Panc1 (cell line): ENCODE measurements at regions of chr6 and their contacts with region 1.

Region 1: DNA sequence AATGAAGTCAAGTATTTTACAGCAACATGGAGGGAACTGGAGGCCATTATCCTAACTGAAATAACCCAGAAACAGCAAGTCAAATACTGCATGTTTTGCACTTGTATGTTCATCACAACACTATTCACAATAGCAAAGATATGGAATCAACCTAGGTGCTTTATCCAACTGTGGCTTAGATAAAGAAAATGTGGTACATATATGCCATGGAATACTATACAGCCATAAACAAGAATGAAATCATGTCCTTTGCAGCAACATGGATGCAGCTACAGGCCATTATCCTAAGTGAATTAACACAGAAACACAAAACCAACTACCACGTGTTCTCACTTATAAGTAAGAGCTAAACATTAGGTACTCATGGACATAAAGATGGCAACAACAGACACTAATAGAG is 91.5 kb upstream of the E2F3 start:
- DNase-seq: no peak
- ATAC-seq: no peak
- H3K4me3 ChIP-seq: no peak overlapping the region
- H3K27ac ChIP-seq: no peak overlapping the region
- H3K4me1 ChIP-seq: no peaks in the 10 kb centered on the region
- H3K27me3 ChIP-seq: peaks cover 13% of the 10 kb centered on the region
- CTCF ChIP-seq: no peak

Region 2: DNA sequence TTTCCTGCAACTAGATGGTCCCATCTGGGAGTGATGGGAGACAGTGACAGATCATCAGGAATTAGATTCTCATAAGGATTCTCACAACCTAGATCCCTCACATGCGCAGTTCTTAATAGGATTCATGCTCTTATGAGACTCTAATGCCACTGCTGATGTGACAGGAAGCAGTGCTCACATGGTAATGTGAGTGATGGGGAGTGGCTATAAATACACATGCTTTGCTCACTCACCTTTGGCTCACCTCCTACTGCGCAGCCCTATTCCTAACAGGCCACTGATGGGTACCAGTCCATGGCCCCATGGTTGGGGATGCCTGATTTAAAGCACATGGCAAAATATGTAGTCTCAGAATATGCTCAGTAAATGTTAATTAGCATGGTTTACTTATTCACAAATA is 17.3 kb before region 1 on chr6:
- CTCF ChIA-PET with region 1: no interaction called
- POLR2A ChIA-PET with region 1: no interaction called
- in situ Hi-C with region 1: no loop called
- intact Hi-C with region 1: no loop called
- DNase-seq: no peak
- ATAC-seq: no peak
- H3K4me3 ChIP-seq: no peak overlapping the region
- H3K27ac ChIP-seq: no peak overlapping the region
- H3K4me1 ChIP-seq: no peaks in the 10 kb centered on the region
- H3K27me3 ChIP-seq: no peaks in the 10 kb centered on the region
- CTCF ChIP-seq: no peak

Region 3: GRCh38 chr6:20417819-20418218 is 107.6 kb after region 1 on chr6:
- CTCF ChIA-PET with region 1: no interaction called
- POLR2A ChIA-PET with region 1: no interaction called
- in situ Hi-C with region 1: no loop called
- intact Hi-C with region 1: no loop called
- DNase-seq: no peak
- ATAC-seq: peak; percentile 21; the same call in 1 of the 2 replicates
- H3K4me3 ChIP-seq: no peak overlapping the region
- H3K27ac ChIP-seq: no peak overlapping the region
- H3K4me1 ChIP-seq: peaks cover 10% of the 10 kb centered on the region
- H3K27me3 ChIP-seq: no peaks in the 10 kb centered on the region
- CTCF ChIP-seq: no peak

Region 4: DNA sequence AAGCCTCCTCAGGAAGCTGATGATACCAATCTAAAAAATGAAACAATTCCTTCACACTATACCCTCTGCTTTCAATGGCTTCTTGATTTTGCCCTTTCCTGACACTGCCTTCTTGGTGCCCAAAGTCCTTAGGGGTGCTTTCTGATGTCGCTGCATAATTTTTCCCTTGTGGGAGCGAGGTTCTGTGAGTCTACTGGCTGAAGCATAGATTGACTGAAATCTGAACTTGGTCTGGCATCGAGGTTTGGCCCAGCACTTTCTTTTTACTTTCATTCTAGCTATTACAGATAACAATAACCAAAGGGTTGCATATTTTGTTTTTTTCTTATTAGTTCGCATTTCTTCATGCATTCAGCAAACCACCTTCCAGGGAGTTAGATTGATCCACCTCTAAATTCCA is 157.3 kb after region 1 on chr6:
- CTCF ChIA-PET with region 1: no interaction called
- POLR2A ChIA-PET with region 1: interaction called, 13 read pairs
- in situ Hi-C with region 1: no loop called
- intact Hi-C with region 1: no loop called
- DNase-seq: no peak
- ATAC-seq: no peak
- H3K4me3 ChIP-seq: no peak overlapping the region
- H3K27ac ChIP-seq: no peak overlapping the region
- H3K4me1 ChIP-seq: 0 out of 2 replicates have a peak, but pooled peaks cover 4% of the 10 kb centered on the region
- H3K27me3 ChIP-seq: no peaks in the 10 kb centered on the region
- CTCF ChIP-seq: no peak

Region 5: DNA sequence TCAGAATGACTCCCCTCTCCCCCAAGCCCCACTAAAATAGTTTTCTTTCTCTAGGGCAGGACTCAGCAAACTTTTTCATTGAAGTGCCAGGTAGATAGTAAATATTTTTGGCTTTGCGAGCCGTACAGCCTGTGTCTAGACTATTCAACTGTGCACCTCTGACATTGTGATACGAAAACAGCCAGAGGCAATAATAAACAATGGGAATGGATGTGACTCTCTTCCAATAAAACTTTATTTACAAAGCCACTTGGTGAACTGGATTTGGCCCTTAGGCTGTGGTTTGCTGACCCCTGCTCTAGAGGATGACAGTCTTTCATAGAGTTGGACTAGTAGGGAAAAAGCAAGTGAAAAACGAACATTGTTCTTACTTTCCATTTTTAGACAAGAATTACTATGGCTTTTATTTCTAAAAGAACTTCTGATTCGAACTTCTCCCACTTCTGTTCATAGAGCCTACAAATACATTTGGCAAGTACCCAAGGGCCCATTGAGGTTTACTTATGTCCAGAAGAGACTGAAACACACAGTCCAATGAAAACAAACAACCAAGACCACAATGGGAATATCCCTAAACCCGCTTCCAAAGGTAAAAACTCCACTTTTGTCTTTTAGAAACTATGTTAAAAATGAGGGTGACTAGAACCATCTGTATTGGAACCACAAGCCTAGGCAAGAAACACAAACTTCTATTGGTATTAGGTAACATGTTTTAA is 177.6 kb after region 1 on chr6:
- CTCF ChIA-PET with region 1: no interaction called
- POLR2A ChIA-PET with region 1: no interaction called
- in situ Hi-C with region 1: no loop called
- intact Hi-C with region 1: no loop called
- DNase-seq: no peak
- ATAC-seq: no peak
- H3K4me3 ChIP-seq: no peak overlapping the region
- H3K27ac ChIP-seq: no peak overlapping the region
- H3K4me1 ChIP-seq: no peaks in the 10 kb centered on the region
- H3K27me3 ChIP-seq: no peaks in the 10 kb centered on the region
- CTCF ChIP-seq: no peak